T-cell (primary cell): ENCODE measurements at regions of chr9 and their contacts with region 1.

Region 1: DNA sequence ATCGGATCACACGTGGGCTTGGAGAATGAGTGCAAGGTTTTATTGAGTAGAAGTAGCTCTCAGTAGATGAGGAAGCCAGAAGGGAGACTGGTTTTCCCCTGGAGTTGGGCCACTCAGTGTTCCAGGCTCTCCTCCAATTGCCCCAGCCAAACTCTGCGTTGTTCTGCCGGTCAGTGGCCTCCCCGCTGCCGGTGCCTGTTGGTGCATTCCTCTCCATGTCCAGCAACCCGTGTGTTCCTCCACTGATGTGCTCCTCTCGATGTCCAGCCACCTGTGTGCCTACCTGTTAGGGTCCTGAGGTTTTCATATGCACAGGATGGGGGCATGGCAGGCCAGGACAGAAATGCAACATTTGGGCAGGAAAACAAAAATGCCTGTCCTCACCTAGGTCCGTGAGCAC is 888.0 kb upstream of the PTPRD start:
- DNase-seq: no peak
- ATAC-seq: no peak
- H3K4me3 ChIP-seq: no peak overlapping the region
- H3K4me3 Mint-ChIP-seq: no peak overlapping the region
- H3K27ac ChIP-seq: no peak overlapping the region
- H3K27ac Mint-ChIP-seq: no peak overlapping the region
- H3K4me1 ChIP-seq: no peaks in the 10 kb centered on the region
- H3K4me1 Mint-ChIP-seq: no peaks in the 10 kb centered on the region
- H3K27me3 ChIP-seq: no peaks in the 10 kb centered on the region
- H3K27me3 Mint-ChIP-seq: no peaks in the 10 kb centered on the region

Region 2: GRCh38 chr9:11595756-11596155 is 95.0 kb after region 1 on chr9:
- CTCF ChIA-PET with region 1: no interaction called
- POLR2A ChIA-PET with region 1: interaction called in 1 of 2 experiments, 13 read pairs
- DNase-seq: no peak
- ATAC-seq: no peak
- H3K4me3 ChIP-seq: no peak overlapping the region
- H3K4me3 Mint-ChIP-seq: no peak overlapping the region
- H3K27ac ChIP-seq: no peak overlapping the region
- H3K27ac Mint-ChIP-seq: no peak overlapping the region
- H3K4me1 ChIP-seq: no peaks in the 10 kb centered on the region
- H3K4me1 Mint-ChIP-seq: no peaks in the 10 kb centered on the region
- H3K27me3 ChIP-seq: no peaks in the 10 kb centered on the region
- H3K27me3 Mint-ChIP-seq: no peaks in the 10 kb centered on the region